ENCODE measurements at regions of chr1 and their contacts with region 1.

Region 1: DNA sequence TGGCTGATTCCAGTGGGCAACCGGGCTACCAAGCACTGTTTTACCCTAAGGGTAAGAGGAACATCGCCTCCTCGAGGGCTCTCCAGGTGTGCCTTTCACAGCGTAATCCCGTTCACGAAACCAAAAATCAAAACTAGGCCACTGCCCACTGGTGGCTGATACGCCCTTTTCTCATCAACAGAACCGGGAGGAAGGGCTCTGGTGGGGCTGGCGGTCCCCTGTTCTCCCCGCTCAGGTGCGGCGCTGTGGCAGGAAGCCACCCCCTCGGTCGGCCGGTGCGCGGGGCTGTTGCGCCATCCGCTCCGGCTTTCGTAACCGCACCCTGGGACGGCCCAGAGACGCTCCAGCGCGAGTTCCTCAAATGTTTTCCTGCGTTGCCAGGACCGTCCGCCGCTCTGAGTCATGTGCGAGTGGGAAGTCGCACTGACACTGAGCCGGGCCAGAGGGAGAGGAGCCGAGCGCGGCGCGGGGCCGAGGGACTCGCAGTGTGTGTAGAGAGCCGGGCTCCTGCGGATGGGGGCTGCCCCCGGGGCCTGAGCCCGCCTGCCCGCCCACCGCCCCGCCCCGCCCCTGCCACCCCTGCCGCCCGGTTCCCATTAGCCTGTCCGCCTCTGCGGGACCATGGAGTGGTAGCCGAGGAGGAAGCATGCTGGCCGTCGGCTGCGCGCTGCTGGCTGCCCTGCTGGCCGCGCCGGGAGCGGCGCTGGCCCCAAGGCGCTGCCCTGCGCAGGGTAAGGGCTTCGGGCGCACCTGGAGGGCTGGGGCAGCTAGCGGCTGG is at the start of gene IL6R:
- DNase-seq: peak; percentile 98
- ATAC-seq: peak; percentile 60 to 61
- H3K4me3 ChIP-seq: peak within 1 kb of the TSS; percentile 90 to 96 (median 93)
- H3K27ac ChIP-seq: peak within 1 kb of the TSS; percentile 99 to 100 (median 100)
- H3K4me1 ChIP-seq: peaks cover 29 to 41% of the 10 kb centered on the region in 2 donors
- H3K27me3 ChIP-seq: no peaks in the 10 kb centered on the region
- CTCF ChIP-seq: peak in 4 of 5 experiments; percentile 7 to 60 (median 48)
- POLR2A ChIP-seq: peak; percentile 89 to 91
- total RNA-seq, gene IL6R: 271 to 435 (median 367) TPM

Region 2: GRCh38 chr1:154324669-154325582 is 80.2 kb before region 1 on chr1 and contains the start of gene ATP8B2:
- in situ Hi-C with region 1: no loop called
- intact Hi-C with region 1: loop called (anchors 10 kb)
- DNase-seq: peak; percentile 50 to 60
- ATAC-seq: peak; percentile 45 to 63
- H3K4me3 ChIP-seq: peak within 1 kb of the TSS; percentile 48 to 58 (median 56)
- H3K27ac ChIP-seq: peak within 1 kb of the TSS; percentile 43 to 80 (median 76)
- H3K4me1 ChIP-seq: peaks cover 21 to 28% of the 10 kb centered on the region in 2 donors
- H3K27me3 ChIP-seq: peaks cover 23 to 29% (median 28%) of the 10 kb centered on the region in 3 donors
- CTCF ChIP-seq: peak; percentile 72 to 92 (median 88)
- POLR2A ChIP-seq: no peak
- total RNA-seq, gene ATP8B2: 5.8 to 22.5 (median 7.2) TPM

Region 3: DNA sequence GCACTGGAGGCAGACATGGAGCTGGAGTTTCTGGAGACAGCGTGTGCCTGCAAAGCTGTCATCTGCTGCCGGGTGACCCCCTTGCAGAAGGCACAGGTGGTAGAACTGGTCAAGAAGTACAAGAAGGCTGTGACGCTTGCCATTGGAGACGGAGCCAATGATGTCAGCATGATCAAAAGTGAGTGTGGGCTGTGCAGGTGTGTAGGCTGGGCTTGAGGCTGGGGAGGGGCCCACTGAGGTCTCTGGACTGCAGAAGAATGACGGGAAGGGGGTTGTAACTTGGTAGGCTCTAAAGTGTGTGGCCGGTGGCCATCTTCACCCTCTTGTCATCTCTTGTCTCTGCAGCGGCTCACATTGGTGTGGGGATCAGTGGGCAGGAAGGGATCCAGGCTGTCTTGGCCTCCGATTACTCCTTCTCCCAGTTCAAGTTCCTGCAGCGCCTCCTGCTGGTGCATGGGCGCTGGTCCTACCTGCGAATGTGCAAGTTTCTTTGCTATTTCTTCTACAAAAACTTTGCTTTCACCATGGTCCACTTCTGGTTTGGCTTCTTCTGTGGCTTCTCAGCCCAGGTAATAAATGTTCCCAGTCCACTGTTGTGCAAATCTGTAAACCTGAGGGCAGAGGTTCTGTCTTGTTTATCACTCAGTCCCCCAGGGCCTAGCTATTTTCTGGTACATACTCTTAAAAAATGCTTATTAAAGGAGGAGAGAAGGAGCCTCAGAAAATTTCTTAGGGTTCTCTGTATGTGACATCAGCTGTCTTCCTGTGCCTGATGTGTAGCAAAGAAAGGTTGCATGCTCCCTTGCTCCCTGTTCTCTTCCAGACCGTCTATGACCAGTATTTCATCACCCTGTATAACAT is 60.0 kb before region 1 on chr1:
- in situ Hi-C with region 1: no loop called
- intact Hi-C with region 1: no loop called
- DNase-seq: no peak
- ATAC-seq: no peak
- H3K4me3 ChIP-seq: no peak overlapping the region
- H3K27ac ChIP-seq: no peak overlapping the region
- H3K4me1 ChIP-seq: no peaks in the 10 kb centered on the region
- H3K27me3 ChIP-seq: no peaks in the 10 kb centered on the region
- CTCF ChIP-seq: peak in 2 of 5 experiments; percentile 31 to 35
- POLR2A ChIP-seq: no peak

Region 4: GRCh38 chr1:154419620-154420571 is 14.7 kb after region 1 on chr1:
- in situ Hi-C with region 1: no loop called
- intact Hi-C with region 1: loop called (anchors 1 kb)
- DNase-seq: peak; percentile 97 to 99
- ATAC-seq: peak; percentile 60 to 63
- H3K4me3 ChIP-seq: peak overlapping the region; percentile 34 to 49 (median 44)
- H3K27ac ChIP-seq: peak overlapping the region; percentile 99 to 100 (median 100)
- H3K4me1 ChIP-seq: peaks cover 97 to 99% of the 10 kb centered on the region in 2 donors
- H3K27me3 ChIP-seq: no peaks in the 10 kb centered on the region
- CTCF ChIP-seq: no peak
- POLR2A ChIP-seq: peak; percentile 48 to 58

Region 5: DNA sequence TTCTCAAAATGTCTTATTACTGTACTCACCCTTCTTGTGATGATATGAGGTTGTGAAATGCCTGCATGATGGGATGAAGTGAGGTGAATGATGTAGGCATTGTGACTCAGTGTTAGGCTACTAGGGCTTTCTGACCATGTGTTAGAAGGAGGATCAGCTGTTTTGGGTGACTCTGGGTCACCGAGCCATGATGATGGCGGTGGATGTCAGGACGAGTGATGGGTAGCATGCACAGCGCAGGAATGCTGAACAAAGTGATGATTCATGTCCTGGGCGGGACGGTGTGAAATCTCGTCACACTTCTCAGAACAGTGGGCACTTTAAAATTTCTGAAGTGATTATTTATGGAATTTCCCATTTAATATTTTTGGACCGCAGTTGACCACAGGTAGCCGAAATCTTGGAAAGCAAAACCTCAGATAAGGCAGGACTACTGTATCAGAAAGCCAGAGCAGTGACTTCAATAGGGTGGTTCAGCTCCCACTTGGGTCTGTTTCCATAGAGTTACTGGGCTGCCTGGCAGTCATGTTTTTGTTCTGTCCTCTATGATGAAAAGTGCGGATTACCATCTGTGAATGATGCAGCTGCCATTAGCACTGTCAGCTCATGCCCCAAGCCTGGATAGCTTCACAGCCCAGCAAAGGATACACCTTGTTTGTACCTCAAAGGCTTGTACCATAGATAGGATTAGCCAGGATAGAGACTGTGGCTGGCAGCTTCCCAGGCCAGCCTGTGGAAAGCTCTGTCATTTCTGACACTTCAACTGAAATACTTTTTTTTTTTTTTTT is 26.6 kb after region 1 on chr1:
- in situ Hi-C with region 1: no loop called
- intact Hi-C with region 1: loop called (anchors 1 kb)
- DNase-seq: peak; percentile 74 to 85
- ATAC-seq: peak; percentile 51 to 66
- H3K4me3 ChIP-seq: no peak overlapping the region
- H3K27ac ChIP-seq: peak overlapping the region; percentile 80 to 100 (median 91)
- H3K4me1 ChIP-seq: peaks cover 80 to 82% of the 10 kb centered on the region in 2 donors
- H3K27me3 ChIP-seq: no peaks in the 10 kb centered on the region
- CTCF ChIP-seq: no peak
- POLR2A ChIP-seq: peak in 1 of 2 donors; percentile 25

Region 6: GRCh38 chr1:154863315-154864174 is 458.4 kb after region 1 on chr1:
- in situ Hi-C with region 1: no loop called
- intact Hi-C with region 1: loop called (anchors 5 kb)
- DNase-seq: peak; percentile 68 to 91
- ATAC-seq: peak; percentile 35 to 37
- H3K4me3 ChIP-seq: no peak overlapping the region
- H3K27ac ChIP-seq: peak overlapping the region; percentile 91 to 99 (median 96)
- H3K4me1 ChIP-seq: peaks cover 67 to 81% of the 10 kb centered on the region in 2 donors
- H3K27me3 ChIP-seq: no peaks in the 10 kb centered on the region
- CTCF ChIP-seq: peak; percentile 85 to 94 (median 91)
- POLR2A ChIP-seq: peak; percentile 65 to 72

Region 7: DNA sequence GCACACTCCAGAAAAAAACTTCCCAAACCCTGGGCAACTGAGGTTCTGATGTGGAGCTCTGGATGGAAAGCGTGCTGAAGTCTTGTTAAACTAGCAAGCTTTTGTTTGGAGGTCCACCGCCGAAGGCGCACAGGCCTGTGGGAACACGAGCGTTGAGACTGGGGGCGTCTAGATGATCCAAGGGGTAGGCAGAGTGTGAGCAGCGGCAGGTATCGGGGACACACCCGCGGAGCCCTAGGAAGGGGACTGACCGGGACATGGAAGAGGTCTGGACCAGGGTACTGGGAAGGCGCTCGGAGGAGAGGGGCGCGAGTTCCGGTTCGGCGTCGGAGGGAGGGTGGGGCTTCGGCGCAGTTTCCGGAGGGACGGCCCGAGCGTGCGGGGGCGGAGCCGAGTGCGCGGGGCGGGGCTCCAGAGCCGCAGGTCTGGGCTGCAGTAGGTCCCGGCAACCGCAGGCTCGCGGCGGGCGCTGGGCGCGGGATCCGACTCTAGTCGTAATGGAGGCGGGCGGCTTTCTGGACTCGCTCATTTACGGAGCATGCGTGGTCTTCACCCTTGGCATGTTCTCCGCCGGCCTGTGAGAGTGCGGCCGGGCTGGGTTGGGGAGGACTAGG is 730.3 kb after region 1 on chr1 and contains the start of gene SLC50A1:
- in situ Hi-C with region 1: no loop called
- intact Hi-C with region 1: loop called (anchors 10 kb)
- DNase-seq: peak; percentile 87 to 93
- ATAC-seq: peak; percentile 69 to 78
- H3K4me3 ChIP-seq: peak within 1 kb of the TSS; percentile 82 to 93 (median 87)
- H3K27ac ChIP-seq: peak within 1 kb of the TSS; percentile 96 to 100 (median 98)
- H3K4me1 ChIP-seq: peaks cover 55 to 61% of the 10 kb centered on the region in 2 donors
- H3K27me3 ChIP-seq: no peaks in the 10 kb centered on the region
- CTCF ChIP-seq: peak; percentile 43 to 64 (median 59)
- POLR2A ChIP-seq: peak; percentile 90 to 92
- total RNA-seq, gene SLC50A1: 3.5 to 11.4 (median 8.2) TPM